ENCODE measurements at regions of chr11 and their contacts with region 1.

Region 1: GRCh38 chr11:75351791-75352587 is 528 bp upstream of the ARRB1 start:
- DNase-seq: peak in 1 of 2 donors; percentile 41
- ATAC-seq: peak; percentile 17 to 23
- H3K4me3 ChIP-seq: peak overlapping the region; percentile 67 to 74 (median 72)
- H3K27ac ChIP-seq: peak overlapping the region; percentile 80 to 86 (median 86)
- H3K4me1 ChIP-seq: peaks cover 32 to 35% of the 10 kb centered on the region in 2 donors
- H3K27me3 ChIP-seq: no peaks in the 10 kb centered on the region
- CTCF ChIP-seq: no peak
- POLR2A ChIP-seq: no peak

Region 2: DNA sequence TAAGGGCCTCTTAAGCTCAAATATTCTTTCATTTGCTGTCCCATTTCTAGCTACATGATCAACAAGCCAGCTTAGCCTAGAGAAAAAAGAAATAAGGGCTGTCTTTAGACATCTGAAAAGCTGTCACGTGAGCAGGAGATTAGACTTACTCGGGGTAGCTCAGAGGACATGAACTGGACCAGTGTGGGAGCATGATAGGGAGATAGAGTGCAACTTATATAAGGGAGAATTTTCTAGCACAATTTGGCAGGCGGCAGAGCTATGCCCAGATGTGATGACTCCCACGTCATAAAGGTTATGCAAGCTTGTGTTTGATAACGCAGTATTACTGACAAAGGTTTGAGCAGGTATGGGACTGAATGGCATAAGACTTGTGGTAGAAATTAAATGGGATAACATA is 139.6 kb before region 1 on chr11:
- in situ Hi-C with region 1: no loop called
- intact Hi-C with region 1: no loop called
- DNase-seq: no peak
- ATAC-seq: no peak
- H3K4me3 ChIP-seq: no peak overlapping the region
- H3K27ac ChIP-seq: no peak overlapping the region
- H3K4me1 ChIP-seq: no peaks in the 10 kb centered on the region
- H3K27me3 ChIP-seq: no peaks in the 10 kb centered on the region
- CTCF ChIP-seq: no peak
- POLR2A ChIP-seq: no peak

Region 3: GRCh38 chr11:75223954-75224643 is 127.9 kb before region 1 on chr11:
- in situ Hi-C with region 1: no loop called
- intact Hi-C with region 1: no loop called
- DNase-seq: no peak
- ATAC-seq: no peak
- H3K4me3 ChIP-seq: no peak overlapping the region
- H3K27ac ChIP-seq: no peak overlapping the region
- H3K4me1 ChIP-seq: no peaks in the 10 kb centered on the region
- H3K27me3 ChIP-seq: no peaks in the 10 kb centered on the region
- CTCF ChIP-seq: no peak
- POLR2A ChIP-seq: no peak

Region 4: DNA sequence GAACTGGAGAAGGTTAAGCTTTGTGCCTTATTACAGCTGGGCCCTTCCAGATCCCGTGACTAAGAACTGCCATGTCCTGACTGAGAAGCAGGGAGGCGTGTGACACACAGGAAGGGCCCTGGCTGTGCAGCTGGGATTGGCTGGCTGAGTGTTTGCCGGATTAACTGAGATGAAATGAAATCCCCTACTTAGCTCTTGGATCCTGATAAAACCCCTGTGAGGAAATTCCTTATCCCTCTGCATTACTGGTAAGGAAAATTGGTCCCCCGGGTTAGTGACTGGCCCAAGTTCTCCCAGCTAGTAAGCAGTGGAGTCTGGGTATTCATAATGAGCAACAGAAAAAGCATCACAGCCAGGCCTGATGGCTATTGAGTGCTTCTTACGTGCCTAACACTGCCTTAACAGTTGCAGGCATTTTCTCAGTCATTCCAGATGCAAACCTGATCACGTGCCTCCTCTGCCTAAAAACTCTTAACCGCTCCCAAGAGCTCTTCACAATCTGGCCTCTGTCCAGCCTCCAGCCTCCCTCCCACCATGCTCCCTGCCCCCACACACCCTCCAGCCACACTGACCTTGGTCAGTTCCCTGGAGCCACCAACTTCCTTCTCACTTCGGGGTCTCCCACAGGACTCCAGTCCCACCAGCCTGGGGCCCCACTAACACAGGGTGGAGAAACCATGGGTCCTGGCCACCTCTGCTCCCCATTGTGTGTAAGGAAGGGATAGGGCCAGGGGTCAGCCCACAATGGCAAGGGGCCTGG is 38.3 kb before region 1 on chr11:
- in situ Hi-C with region 1: no loop called
- intact Hi-C with region 1: loop called (anchors 5 kb)
- DNase-seq: peak; percentile 31 to 56
- ATAC-seq: peak; percentile 58 to 64
- H3K4me3 ChIP-seq: no peak overlapping the region
- H3K27ac ChIP-seq: peak overlapping the region; percentile 74 to 84 (median 80)
- H3K4me1 ChIP-seq: peaks cover 23 to 34% of the 10 kb centered on the region in 2 donors
- H3K27me3 ChIP-seq: no peaks in the 10 kb centered on the region
- CTCF ChIP-seq: no peak
- POLR2A ChIP-seq: no peak